ENCODE measurements at regions of chr2 and their contacts with region 1.

Region 1: DNA sequence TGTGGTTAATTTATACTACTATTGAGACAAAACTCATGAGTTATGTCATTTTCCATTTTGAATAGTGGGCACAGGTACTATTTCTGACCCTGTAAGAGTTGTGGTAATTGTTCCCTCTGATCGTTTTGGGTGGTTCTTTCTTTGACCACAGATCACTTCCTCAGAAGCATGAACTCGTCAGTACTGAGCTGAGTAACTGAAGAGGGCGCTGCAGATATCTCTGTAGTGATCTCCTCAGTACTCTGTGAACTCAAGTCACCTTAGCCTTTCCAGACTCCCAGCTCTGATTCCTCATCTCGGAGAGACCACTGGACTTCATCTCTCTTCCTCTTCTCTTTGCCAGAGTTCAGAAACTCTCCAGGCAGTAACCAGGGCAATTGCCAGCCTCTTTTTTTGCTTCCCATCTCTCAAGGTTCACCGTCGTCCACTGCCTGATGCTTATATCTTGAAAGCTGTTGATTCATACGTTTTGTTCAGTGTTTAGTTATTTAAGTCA is 9.4 kb upstream of the IL1RL1 start:
- DNase-seq: peak; percentile 54
- CTCF ChIP-seq: peak; percentile 62

Region 2: GRCh38 chr2:101946372-101947039 is 355.4 kb before region 1 on chr2:
- in situ Hi-C with region 1: no loop called
- DNase-seq: no peak
- CTCF ChIP-seq: no peak

Region 3: DNA sequence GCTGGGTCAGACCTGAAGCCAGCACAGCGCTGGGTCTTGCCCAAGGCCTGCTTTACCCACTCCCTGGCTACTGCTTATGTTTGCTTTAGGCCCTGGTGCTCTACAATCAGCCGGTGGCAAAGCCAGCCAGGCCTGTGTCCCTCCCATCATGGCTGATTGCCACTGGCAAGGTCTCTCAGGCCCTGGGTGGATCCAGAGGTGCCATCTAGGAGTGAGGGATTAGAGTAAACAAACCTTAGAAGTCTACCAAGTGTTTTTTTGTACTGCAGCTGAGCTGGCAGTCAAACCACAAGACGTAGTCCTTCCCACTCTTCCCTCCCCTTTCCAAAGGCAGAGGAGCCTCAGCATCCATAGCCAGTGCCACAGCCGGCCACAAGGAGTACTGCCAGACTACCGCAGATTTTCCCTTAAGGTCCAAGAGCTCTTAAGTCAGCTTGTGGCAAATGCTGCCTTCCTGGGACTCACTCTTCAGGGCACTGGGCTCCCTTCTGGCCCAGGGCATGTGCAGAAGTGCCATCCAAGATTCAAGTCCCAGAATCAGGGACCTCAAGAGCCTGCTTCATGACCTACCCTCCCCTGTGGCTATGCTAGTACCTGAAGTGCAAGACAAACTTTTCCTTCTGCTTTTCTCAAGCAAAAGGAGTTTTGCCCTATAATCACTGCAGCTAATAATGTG is 95.1 kb before region 1 on chr2:
- in situ Hi-C with region 1: loop called (anchors 25 kb)
- DNase-seq: no peak
- CTCF ChIP-seq: no peak

Region 4: GRCh38 chr2:102442967-102443828 is 141.3 kb after region 1 on chr2:
- in situ Hi-C with region 1: loop called (anchors 25 kb)
- DNase-seq: peak; percentile 60
- CTCF ChIP-seq: peak; percentile 82